ENCODE measurements at regions of chr20 and their contacts with region 1.

Region 1: GRCh38 chr20:19271879-19272651 is 59.6 kb downstream of the SLC24A3 start:
- DNase-seq: no peak
- ATAC-seq: no peak
- H3K4me3 ChIP-seq: no peak overlapping the region
- H3K27ac ChIP-seq: no peak overlapping the region
- H3K4me1 ChIP-seq: no peaks in the 10 kb centered on the region
- H3K27me3 ChIP-seq: no peaks in the 10 kb centered on the region
- CTCF ChIP-seq: no peak
- POLR2A ChIP-seq: no peak
- RAD21 ChIP-seq: no peak

Region 2: DNA sequence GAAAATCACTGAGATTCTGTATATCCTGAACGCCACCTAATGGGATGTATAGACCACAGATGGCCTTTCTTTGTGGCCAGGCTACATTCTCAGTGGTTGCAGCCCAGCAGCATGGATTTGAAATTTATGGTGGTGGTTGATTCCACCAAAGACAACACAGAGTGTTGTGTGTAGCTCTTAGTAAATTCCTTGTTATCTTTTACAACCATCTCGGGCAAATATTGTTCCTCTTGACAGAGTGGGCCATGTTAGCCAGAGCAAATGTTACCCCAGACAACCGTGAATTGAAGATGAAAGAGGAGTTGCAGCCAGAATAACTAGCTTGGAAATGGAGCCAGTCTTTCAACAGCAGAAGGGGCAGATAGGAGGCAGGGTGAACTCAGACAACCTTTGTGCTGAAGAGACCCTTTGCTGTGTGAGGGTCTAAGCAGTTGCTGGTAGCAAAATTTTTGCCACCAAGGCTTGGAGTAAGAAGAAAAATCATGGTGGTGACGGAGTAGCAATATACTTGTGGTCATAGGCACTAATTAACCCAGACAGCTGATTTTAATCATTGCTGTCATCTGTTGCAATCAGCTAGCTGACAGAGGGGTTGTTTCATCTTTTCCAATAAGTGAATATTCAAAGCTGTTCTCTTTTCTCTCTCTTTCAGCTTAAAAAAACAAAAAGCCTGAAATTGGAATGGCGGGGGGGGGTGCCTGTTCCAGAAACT is 20.0 kb before region 1 on chr20:
- CTCF ChIA-PET with region 1: no interaction called
- POLR2A ChIA-PET with region 1: interaction called, 11 read pairs
- dilution Hi-C with region 1: no loop called
- in situ Hi-C with region 1: no loop called
- intact Hi-C with region 1: no loop called
- DNase-seq: no peak
- ATAC-seq: no peak
- H3K4me3 ChIP-seq: no peak overlapping the region
- H3K27ac ChIP-seq: no peak overlapping the region
- H3K4me1 ChIP-seq: no peaks in the 10 kb centered on the region
- H3K27me3 ChIP-seq: no peaks in the 10 kb centered on the region
- CTCF ChIP-seq: no peak
- POLR2A ChIP-seq: no peak
- RAD21 ChIP-seq: no peak

Region 3: DNA sequence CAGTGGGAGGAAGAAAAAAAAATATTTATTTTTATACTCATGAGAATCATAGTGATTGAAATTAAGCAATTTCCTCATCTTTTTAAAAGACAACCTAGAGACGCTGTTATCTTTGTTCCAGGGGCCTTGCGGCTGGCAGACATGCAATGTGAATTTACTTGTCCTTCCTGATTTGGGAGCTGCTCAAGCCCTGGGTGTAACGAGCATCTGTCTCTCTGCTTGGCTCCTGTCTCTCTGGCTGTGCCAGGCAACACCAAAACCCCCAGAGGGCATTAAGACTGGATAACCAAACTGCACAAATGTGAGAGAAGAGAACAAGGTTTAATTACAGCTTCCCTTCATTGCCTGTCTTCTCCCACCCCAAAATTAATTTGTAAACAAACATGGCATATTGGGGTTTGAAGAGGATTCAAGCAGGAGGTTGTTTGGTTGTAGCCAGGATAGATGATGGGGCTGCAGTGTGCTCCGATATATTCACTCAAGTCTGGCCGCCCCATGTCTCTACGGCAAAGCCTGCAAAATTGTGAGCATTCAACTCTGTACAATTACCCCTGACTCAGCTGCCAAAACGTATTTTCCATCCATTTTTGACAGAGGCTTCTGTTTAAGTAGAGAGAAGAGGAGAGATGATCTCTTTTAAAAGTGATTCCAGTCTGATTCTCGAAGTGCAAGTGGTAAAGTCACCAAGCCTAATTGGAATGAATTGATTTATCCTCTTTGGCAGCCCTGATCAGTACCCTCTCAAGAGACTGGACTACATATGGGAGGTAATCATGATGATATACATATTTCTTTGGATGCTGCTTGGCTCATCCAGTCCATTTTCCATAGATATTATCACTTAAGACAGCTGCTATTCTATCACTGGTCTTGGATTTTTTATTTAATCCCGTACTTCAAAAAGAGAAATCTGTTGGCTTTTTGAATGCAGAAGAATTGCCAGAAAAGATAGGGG is 110.6 kb after region 1 on chr20:
- CTCF ChIA-PET with region 1: no interaction called
- POLR2A ChIA-PET with region 1: no interaction called
- dilution Hi-C with region 1: no loop called
- in situ Hi-C with region 1: no loop called
- intact Hi-C with region 1: no loop called
- DNase-seq: no peak
- ATAC-seq: no peak
- H3K4me3 ChIP-seq: no peak overlapping the region
- H3K27ac ChIP-seq: no peak overlapping the region
- H3K4me1 ChIP-seq: no peaks in the 10 kb centered on the region
- H3K27me3 ChIP-seq: no peaks in the 10 kb centered on the region
- CTCF ChIP-seq: no peak
- POLR2A ChIP-seq: no peak
- RAD21 ChIP-seq: no peak

Region 4: GRCh38 chr20:20520776-20521175 is 1248.7 kb after region 1 on chr20:
- CTCF ChIA-PET with region 1: no interaction called
- POLR2A ChIA-PET with region 1: no interaction called
- dilution Hi-C with region 1: no loop called
- in situ Hi-C with region 1: no loop called
- intact Hi-C with region 1: no loop called
- DNase-seq: peak; percentile 60
- ATAC-seq: no peak
- H3K4me3 ChIP-seq: no peak overlapping the region
- H3K27ac ChIP-seq: no peak overlapping the region
- H3K4me1 ChIP-seq: peaks cover 2% of the 10 kb centered on the region; the same call in 1 of the 2 replicates
- H3K27me3 ChIP-seq: no peaks in the 10 kb centered on the region
- CTCF ChIP-seq: no peak
- POLR2A ChIP-seq: no peak
- RAD21 ChIP-seq: no peak